ENCODE measurements at regions of chr17 and their contacts with region 1.

Region 1: DNA sequence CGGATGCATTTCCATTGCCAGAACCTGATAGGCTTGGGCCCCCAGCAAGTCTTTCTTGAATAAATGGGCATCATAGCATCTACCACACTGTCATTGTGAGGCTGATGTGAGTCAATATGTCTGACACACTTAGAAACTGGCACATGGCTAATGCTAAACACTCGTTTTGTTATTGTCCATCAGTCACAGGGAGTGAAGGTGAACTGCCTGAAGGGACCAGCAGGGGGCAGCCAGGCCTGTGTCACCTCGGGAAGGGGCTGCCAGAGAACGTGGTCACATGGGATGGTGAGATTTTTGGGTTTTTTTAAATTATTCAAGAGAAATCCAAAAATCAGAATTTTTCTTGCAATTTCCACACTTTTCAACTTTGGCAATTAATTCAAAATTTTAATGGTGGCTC is 831 bp upstream of the RCVRN start:
- DNase-seq: peak in 1 of 2 experiments; percentile 82
- H3K4me3 ChIP-seq: no peak overlapping the region
- H3K27ac ChIP-seq: no peak overlapping the region
- H3K4me1 ChIP-seq: peaks cover 0 to 4% (median 2%) of the 10 kb centered on the region in 4 experiments; a peak in 3 of 7 replicates
- H3K27me3 ChIP-seq: no peaks in the 10 kb centered on the region; a peak in 1 of 7 replicates
- CTCF ChIP-seq: peak; percentile 69 to 90 (median 86)
- EP300 ChIP-seq: no peak
- POLR2A ChIP-seq: no peak
- RAD21 ChIP-seq: peak; percentile 63 to 67

Region 2: DNA sequence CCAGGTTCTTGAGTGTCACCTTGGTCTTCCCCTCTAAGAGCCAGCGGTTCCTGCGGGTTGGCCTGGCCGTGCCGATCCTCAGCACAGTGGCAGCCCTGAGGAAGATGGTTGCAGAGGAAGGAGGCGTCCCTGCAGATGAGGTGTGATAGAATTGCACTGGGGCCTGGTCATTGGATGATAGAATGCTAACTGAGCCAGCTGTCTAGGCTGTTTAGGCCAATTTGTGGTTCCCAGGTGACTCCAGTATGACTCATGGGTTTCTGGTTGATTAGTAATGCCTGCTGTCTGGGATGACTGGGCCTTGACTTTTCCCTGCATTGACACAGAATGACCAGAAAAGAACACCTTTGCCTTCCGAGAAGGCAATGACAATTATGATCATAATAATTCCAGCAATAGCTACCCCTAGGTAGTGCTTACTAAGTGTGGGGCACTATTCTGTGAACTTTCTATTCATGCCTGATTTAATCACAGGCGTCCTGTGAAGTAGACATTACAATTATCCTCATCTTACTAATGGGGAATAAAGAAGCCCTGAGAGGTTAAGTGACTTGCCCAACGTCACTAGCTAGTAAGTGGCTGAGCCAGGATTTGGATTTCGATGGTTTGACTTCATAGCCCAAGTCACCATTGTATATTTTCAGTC is 229.0 kb before region 1 on chr17:
- CTCF ChIA-PET with region 1: no interaction called
- POLR2A ChIA-PET with region 1: no interaction called
- DNase-seq: no peak
- H3K4me3 ChIP-seq: no peak overlapping the region
- H3K27ac ChIP-seq: no peak overlapping the region
- H3K4me1 ChIP-seq: no peaks in the 10 kb centered on the region
- H3K27me3 ChIP-seq: no peaks in the 10 kb centered on the region
- CTCF ChIP-seq: no peak
- EP300 ChIP-seq: no peak
- POLR2A ChIP-seq: no peak
- RAD21 ChIP-seq: no peak

Region 3: GRCh38 chr17:9875441-9875840 is 30.5 kb before region 1 on chr17:
- CTCF ChIA-PET with region 1: no interaction called
- POLR2A ChIA-PET with region 1: no interaction called
- DNase-seq: peak in 1 of 2 experiments; percentile 5
- H3K4me3 ChIP-seq: no peak overlapping the region
- H3K27ac ChIP-seq: no peak overlapping the region
- H3K4me1 ChIP-seq: no peaks in the 10 kb centered on the region
- H3K27me3 ChIP-seq: no peaks in the 10 kb centered on the region
- CTCF ChIP-seq: no peak
- EP300 ChIP-seq: no peak
- POLR2A ChIP-seq: no peak
- RAD21 ChIP-seq: no peak

Region 4: GRCh38 chr17:9890124-9890523 is 15.8 kb before region 1 on chr17:
- CTCF ChIA-PET with region 1: interaction called, 101 read pairs
- POLR2A ChIA-PET with region 1: no interaction called
- DNase-seq: peak; percentile 50 to 89
- H3K4me3 ChIP-seq: no peak overlapping the region
- H3K27ac ChIP-seq: no peak overlapping the region
- H3K4me1 ChIP-seq: 0 out of 7 replicates have a peak, but pooled peaks cover 0 to 3% (median 0%) of the 10 kb centered on the region in 4 experiments
- H3K27me3 ChIP-seq: no peaks in the 10 kb centered on the region
- CTCF ChIP-seq: peak; percentile 86 to 98 (median 97)
- EP300 ChIP-seq: no peak
- POLR2A ChIP-seq: no peak
- RAD21 ChIP-seq: peak; percentile 74 to 79

Region 5: GRCh38 chr17:9918804-9919352 is 13.0 kb after region 1 on chr17:
- CTCF ChIA-PET with region 1: interaction called, 49 read pairs
- POLR2A ChIA-PET with region 1: no interaction called
- DNase-seq: no peak
- H3K4me3 ChIP-seq: no peak overlapping the region
- H3K27ac ChIP-seq: no peak overlapping the region
- H3K4me1 ChIP-seq: no peaks in the 10 kb centered on the region
- H3K27me3 ChIP-seq: no peaks in the 10 kb centered on the region
- CTCF ChIP-seq: no peak
- EP300 ChIP-seq: no peak
- POLR2A ChIP-seq: no peak
- RAD21 ChIP-seq: no peak

Region 6: GRCh38 chr17:9982159-9982558 is 76.3 kb after region 1 on chr17:
- CTCF ChIA-PET with region 1: interaction called, 10 read pairs
- POLR2A ChIA-PET with region 1: no interaction called
- DNase-seq: peak; percentile 25 to 61
- H3K4me3 ChIP-seq: no peak overlapping the region
- H3K27ac ChIP-seq: no peak overlapping the region
- H3K4me1 ChIP-seq: peaks cover 0 to 3% (median 0%) of the 10 kb centered on the region in 4 experiments; a peak in 2 of 7 replicates
- H3K27me3 ChIP-seq: no peaks in the 10 kb centered on the region
- CTCF ChIP-seq: peak; percentile 43 to 80 (median 69)
- EP300 ChIP-seq: no peak
- POLR2A ChIP-seq: no peak
- RAD21 ChIP-seq: peak; percentile 71 to 80

Region 7: DNA sequence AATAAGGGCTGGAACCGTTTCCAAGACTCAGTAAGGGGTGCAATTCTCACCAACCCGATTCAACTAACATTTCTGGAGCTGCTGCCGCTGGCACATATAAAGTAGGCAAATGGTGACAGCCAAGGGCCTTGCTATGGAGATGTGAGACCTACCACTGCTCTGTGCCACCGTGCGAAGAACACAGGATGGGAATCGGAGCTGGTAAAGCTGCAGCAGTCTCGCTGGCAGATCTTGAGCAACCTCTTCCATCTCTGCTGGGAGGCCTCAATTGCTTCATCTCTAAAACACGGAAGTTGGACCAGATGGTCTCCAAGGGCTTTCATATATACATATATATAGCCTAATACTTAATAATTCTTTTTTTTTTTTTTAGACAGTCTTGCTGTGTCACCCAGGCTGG is 128.1 kb after region 1 on chr17:
- CTCF ChIA-PET with region 1: no interaction called
- POLR2A ChIA-PET with region 1: no interaction called
- DNase-seq: no peak
- H3K4me3 ChIP-seq: no peak overlapping the region
- H3K27ac ChIP-seq: no peak overlapping the region
- H3K4me1 ChIP-seq: peaks cover 0 to 5% (median 0%) of the 10 kb centered on the region in 4 experiments; a peak in 1 of 7 replicates
- H3K27me3 ChIP-seq: no peaks in the 10 kb centered on the region
- CTCF ChIP-seq: no peak
- EP300 ChIP-seq: no peak
- POLR2A ChIP-seq: no peak
- RAD21 ChIP-seq: no peak

Measured in H1 (cell line).